CD4-positive, alpha-beta T cell (primary cell): ENCODE measurements at regions of chr14 and their contacts with region 1.

Region 1: GRCh38 chr14:100239840-100240724 is 1.1 kb downstream of the YY1 start:
- DNase-seq: peak; percentile 65 to 95 (median 84)
- ATAC-seq: peak; percentile 47
- H3K4me3 ChIP-seq: peak overlapping the region; percentile 78
- H3K4me3 Mint-ChIP-seq: peak overlapping the region; percentile 97
- H3K27ac ChIP-seq: peak overlapping the region; percentile 82 to 86
- H3K27ac Mint-ChIP-seq: peak overlapping the region; percentile 98
- H3K4me1 ChIP-seq: peaks cover 54% of the 10 kb centered on the region
- H3K4me1 Mint-ChIP-seq: peaks cover 63% of the 10 kb centered on the region
- H3K27me3 ChIP-seq: no peaks in the 10 kb centered on the region
- H3K27me3 Mint-ChIP-seq: no peaks in the 10 kb centered on the region
- CTCF ChIP-seq: peak; percentile 30

Region 2: DNA sequence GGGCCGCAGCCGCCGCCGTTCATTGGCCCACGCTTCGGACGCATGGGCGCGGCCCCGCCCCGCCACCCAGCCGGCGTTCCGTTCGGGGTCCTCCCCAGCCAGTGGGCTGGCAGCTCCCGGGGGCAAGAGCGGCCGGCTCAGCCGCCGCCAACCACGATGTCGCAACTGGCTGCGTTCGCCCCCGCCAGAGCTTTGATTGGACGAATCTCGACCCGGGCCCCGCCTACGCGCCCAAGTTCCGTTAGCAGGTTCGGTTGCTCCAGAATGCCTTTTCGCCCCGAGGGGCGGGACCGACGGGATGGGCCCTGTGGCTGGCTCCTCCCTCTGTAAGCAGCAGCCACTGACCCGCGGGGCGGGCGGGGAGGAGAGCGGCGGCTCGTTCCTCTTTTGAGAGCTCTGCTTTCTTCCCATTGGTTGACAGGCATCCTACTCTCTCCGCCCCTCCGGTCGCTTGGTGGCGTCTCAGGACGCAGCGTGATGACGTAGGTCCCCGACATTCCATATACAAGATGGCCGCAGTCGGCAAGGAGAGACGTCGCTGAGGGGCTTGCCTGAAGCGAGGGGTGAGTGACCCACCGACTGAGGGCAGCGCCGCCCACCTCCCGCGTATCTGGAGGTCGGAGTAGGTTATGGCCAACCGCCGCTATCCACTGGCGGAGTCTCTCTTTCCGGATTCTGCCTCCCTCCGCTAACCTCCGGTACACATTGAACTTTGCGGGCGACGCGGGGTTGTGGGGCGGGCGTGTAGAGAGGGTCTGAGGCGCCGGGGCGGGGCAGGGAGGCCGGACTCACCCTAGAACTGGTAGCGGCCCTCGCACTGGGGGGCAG is 759.0 kb before region 1 on chr14 and contains the start of gene CCNK:
- CTCF ChIA-PET with region 1: no interaction called
- POLR2A ChIA-PET with region 1: interaction called, 4 read pairs
- intact Hi-C with region 1: loop called in 1 of 2 experiments (anchors 5 kb)
- DNase-seq: peak; percentile 100
- ATAC-seq: peak; percentile 87
- H3K4me3 ChIP-seq: peak within 1 kb of the TSS; percentile 96
- H3K4me3 Mint-ChIP-seq: peak within 1 kb of the TSS; percentile 92
- H3K27ac ChIP-seq: peak within 1 kb of the TSS; percentile 90 to 96
- H3K27ac Mint-ChIP-seq: peak within 1 kb of the TSS; percentile 94
- H3K4me1 ChIP-seq: peaks cover 29% of the 10 kb centered on the region
- H3K4me1 Mint-ChIP-seq: peaks cover 74% of the 10 kb centered on the region
- H3K27me3 ChIP-seq: no peaks in the 10 kb centered on the region
- H3K27me3 Mint-ChIP-seq: no peaks in the 10 kb centered on the region
- CTCF ChIP-seq: no peak
- total RNA-seq, gene CCNK: 140 to 151 TPM

Region 3: DNA sequence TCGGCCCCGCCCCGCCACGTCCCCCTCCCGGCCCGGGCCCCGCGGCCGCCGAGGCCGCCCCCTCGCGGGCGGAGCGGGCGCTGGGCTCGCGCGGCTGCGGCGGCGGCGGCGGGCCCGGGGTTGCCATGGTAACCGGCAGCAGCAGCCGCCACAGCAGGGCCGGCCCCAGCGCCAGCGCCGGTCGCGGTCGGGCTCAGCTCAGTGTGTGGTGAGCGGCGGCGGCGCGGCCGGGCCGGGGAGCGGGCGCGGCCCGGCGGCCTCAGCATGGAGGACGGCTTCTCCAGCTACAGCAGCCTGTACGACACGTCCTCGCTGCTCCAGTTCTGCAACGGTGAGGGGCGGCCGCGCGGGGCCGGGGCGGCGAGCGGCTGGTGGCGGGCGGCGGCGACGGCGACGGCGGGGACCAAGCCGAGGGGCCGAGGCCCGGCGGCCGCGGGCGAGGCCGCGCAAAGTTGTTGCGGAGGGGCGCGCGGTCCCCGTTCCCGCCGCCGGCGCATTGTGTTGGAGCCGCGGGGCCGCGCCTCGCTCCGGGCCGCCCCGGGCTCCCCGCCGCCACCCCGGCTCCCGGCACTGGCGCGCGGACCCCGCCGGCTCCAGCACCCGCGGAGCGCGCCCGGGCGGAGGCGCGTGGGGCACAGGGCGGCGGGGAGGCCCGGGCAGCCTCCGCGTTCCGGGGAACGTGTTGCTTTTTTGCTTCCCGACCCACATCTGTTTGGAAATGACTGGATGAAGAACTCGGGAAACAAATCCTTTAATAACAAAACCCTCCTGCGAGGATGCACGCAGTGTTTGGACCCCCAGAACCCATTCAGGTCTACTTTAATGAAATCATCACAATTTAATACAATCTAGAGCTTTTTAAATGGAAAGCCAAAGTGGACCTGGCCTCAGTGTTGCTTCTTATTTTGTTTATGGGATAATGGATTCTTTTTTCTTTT is 446.6 kb before region 1 on chr14 and contains the start of gene EML1:
- CTCF ChIA-PET with region 1: no interaction called
- POLR2A ChIA-PET with region 1: no interaction called
- intact Hi-C with region 1: loop called in 1 of 2 experiments (anchors 10 kb)
- DNase-seq: peak; percentile 56 to 91 (median 71)
- ATAC-seq: peak; percentile 81
- H3K4me3 ChIP-seq: peak within 1 kb of the TSS; percentile 29
- H3K4me3 Mint-ChIP-seq: peak within 1 kb of the TSS; percentile 83
- H3K27ac ChIP-seq: no peak within 1 kb of the TSS
- H3K27ac Mint-ChIP-seq: no peak within 1 kb of the TSS
- H3K4me1 ChIP-seq: peaks cover 8% of the 10 kb centered on the region
- H3K4me1 Mint-ChIP-seq: peaks cover 29% of the 10 kb centered on the region
- H3K27me3 ChIP-seq: peaks cover 12 to 19% of the 10 kb centered on the region in 2 experiments
- H3K27me3 Mint-ChIP-seq: peaks cover 38% of the 10 kb centered on the region
- CTCF ChIP-seq: no peak
- total RNA-seq, gene EML1: 0.59 TPM in 1 of 2 experiments, not detected in the other

Region 4: DNA sequence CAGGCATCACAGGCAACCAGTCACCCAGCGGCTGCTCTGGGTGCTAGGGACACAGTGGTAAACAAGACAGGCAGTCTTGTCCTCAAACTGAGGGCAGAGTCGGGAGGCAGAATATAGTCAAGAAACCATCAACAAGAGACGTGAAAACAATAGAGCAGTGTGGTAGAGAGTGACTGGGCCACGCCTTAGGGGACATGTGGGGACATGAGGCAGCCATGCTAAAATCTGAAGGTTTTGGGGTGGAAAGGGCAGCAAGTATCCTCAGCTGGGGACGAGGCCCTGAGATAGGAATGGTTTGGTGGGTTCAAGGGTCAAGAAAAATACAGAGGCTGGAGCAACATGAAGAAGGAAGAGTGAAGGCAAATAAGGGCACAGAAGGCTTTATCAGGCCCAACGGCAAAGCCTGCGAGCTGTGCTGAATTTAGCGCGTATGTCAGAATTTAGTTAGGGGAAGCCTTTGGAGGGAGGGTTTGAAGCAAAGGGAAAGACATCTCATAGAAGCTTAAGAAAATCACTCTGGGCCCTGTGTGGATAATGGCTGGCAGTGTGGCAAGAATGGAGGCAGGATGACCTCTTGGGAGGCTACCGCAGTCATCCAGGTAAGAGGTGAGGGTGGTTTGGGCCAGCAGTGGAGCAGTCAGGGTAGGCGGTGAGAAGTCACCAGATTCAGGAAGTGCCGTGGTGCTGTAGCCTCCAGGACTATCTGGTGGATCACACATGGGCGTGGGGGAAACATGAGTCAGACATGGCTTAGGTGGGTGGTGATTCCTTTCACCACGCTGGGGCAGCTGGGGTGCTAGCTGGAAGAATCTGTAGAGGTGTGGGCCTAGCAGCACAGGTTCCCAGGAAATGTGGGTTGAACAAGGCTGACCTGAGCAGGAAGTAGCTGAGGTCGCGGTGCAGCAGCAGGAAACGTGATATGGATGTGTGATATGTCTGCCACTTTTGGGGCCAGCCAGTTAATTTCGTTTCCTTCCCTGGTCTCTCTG is 171.8 kb before region 1 on chr14:
- CTCF ChIA-PET with region 1: interaction called, 5 read pairs
- POLR2A ChIA-PET with region 1: interaction called, 11 read pairs
- intact Hi-C with region 1: loop called (anchors 5 kb)
- DNase-seq: peak; percentile 68 to 97 (median 82)
- ATAC-seq: peak; percentile 49
- H3K4me3 ChIP-seq: peak overlapping the region; percentile 77
- H3K4me3 Mint-ChIP-seq: peak overlapping the region; percentile 95
- H3K27ac ChIP-seq: peak overlapping the region; percentile 82 to 96
- H3K27ac Mint-ChIP-seq: peak overlapping the region; percentile 98
- H3K4me1 ChIP-seq: peaks cover 67% of the 10 kb centered on the region
- H3K4me1 Mint-ChIP-seq: peaks cover 85% of the 10 kb centered on the region
- H3K27me3 ChIP-seq: no peaks in the 10 kb centered on the region
- H3K27me3 Mint-ChIP-seq: no peaks in the 10 kb centered on the region
- CTCF ChIP-seq: no peak

Region 5: DNA sequence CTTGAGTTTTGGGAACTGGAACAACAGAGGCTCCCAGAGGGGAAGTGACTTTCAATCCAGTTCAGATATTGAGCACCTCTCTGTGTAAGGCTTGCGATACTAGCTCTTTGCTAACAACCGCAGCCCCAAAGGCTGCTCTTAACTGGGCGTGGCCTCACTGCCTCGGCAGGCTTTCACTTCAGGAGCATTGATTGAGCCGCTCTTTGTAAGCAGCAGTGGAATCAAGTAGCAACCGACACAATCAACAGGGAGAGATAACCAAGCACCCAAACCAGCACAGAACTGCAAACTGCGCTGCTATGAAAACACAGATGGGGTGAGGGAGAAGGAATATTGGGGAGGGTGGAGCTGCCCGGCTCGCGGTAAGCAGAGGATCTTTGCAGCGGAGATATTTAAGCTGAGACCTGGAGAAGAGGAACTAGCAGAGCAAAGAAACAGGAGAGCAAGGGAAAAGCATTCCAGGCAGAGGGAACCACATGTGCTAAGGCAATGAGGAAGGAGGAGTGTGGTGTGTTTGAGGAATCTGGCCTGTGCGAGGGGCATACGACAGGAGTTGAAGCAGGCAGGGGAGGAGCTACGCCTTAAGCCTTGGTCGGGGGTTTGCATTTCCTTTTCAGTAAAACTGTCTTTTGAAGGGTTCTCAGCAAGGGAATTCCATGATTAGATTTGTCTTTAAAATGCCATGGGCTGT is 18.4 kb before region 1 on chr14:
- CTCF ChIA-PET with region 1: interaction called, 9 read pairs
- POLR2A ChIA-PET with region 1: interaction called, 151 read pairs
- intact Hi-C with region 1: loop called (anchors 1 to 2 kb)
- DNase-seq: peak; percentile 52 to 87 (median 68)
- ATAC-seq: peak; percentile 94
- H3K4me3 ChIP-seq: peak overlapping the region; percentile 73
- H3K4me3 Mint-ChIP-seq: no peak overlapping the region
- H3K27ac ChIP-seq: peak overlapping the region; percentile 63 to 64
- H3K27ac Mint-ChIP-seq: no peak overlapping the region
- H3K4me1 ChIP-seq: peaks cover 59% of the 10 kb centered on the region
- H3K4me1 Mint-ChIP-seq: peaks cover 6% of the 10 kb centered on the region
- H3K27me3 ChIP-seq: no peaks in the 10 kb centered on the region
- H3K27me3 Mint-ChIP-seq: no peaks in the 10 kb centered on the region
- CTCF ChIP-seq: no peak

Region 6: GRCh38 chr14:100341301-100342031 is 101.4 kb after region 1 on chr14:
- CTCF ChIA-PET with region 1: no interaction called
- POLR2A ChIA-PET with region 1: no interaction called
- intact Hi-C with region 1: no loop called
- DNase-seq: peak in 3 of 14 experiments; percentile 13 to 74 (median 65)
- ATAC-seq: no peak
- H3K4me3 ChIP-seq: no peak overlapping the region
- H3K4me3 Mint-ChIP-seq: no peak overlapping the region
- H3K27ac ChIP-seq: no peak overlapping the region
- H3K27ac Mint-ChIP-seq: no peak overlapping the region
- H3K4me1 ChIP-seq: peaks cover 5% of the 10 kb centered on the region
- H3K4me1 Mint-ChIP-seq: no peaks in the 10 kb centered on the region
- H3K27me3 ChIP-seq: no peaks in the 10 kb centered on the region
- H3K27me3 Mint-ChIP-seq: no peaks in the 10 kb centered on the region
- CTCF ChIP-seq: no peak